Prostate gland (tissue), 2 donors: ENCODE measurements at regions of chr14 and their contacts with region 1.

Region 1: DNA sequence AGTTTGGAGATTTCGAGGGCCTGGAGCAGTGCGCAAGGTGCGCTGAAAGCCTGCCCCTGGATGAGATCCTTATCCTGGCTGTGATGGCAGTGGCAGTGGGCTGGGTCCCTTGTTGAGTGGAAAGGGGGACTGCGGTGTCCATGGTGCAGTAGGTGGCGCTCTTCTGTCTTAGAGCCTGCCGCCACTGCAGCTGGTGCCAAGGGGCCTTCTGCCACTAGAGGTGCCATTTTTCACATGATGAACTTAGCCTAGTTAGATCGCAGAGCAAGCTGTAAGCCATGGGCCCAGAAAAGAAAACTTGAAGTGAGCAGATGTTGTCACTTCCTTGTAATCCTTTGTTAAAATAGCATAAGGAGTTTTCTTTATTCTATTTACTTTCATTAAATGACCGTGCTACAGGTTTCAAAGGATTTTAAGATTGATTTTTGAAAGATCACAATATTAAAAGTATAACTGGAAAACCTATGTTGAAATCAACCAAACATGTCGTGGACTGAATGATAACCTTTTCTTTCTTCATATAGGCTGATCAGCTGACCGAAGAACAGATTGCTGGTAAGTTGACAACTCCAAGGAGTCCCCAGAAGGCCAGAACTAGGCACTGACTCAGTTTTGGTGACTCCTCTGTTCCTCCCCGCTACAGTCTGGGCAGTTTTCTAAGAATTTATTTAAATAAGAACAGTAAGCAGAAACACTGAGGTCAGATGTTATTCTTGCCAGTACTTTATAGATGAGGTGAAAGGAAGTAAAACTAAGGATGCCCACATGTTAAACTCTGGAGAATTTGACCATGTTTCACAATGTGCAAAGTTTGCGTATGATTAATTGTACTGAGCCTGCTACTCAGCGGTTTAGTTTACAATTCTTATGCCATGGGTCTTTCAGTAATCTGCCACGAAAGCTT is 3.0 kb downstream of the CALM1 start:
- DNase-seq: peak; percentile 95
- H3K4me3 ChIP-seq: peak overlapping the region in 1 of 2 donors; percentile 93
- H3K27ac ChIP-seq: peak overlapping the region; percentile 81 to 89
- H3K4me1 ChIP-seq: peaks cover 26% of the 10 kb centered on the region
- H3K27me3 ChIP-seq: no peaks in the 10 kb centered on the region
- CTCF ChIP-seq: peak; percentile 97 to 99 (median 99)
- POLR2A ChIP-seq: no peak

Region 2: DNA sequence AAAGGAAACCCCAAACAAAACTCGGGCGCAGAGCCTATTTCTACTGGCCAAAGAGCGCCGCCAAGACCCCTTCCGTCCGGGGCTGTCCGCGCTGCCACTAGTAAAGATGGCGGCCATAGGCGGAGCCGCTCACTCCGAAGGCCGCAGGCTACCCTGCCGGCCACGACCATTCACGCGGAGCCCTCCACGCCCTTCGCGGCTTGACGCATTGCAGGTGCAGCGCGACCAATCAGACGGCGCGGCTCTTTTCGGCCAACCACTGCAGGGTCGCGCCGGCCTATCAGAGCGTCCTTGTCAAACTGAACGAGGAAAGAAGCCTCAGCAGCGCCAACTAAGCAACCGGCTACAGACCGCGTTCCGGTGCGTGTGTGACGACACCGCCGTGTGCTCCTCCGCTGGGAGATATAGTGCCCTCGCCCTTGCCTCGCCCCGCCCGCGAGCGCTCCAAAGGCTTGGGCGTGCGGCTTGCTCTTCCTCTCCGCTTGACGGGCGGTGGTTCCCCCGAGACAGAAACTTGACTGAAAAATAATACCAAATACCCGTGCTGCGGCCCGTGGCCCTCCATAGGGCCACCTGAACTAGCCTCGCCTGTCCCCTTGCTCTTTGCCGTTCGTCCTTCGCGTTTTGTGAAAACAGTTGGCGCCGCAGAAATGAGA is 16.6 kb before region 1 on chr14:
- intact Hi-C with region 1: loop called (anchors 2 kb)
- DNase-seq: peak; percentile 100
- H3K4me3 ChIP-seq: peak overlapping the region; percentile 49 to 63
- H3K27ac ChIP-seq: peak overlapping the region; percentile 99 to 100
- H3K4me1 ChIP-seq: peaks cover 9% of the 10 kb centered on the region
- H3K27me3 ChIP-seq: no peaks in the 10 kb centered on the region
- CTCF ChIP-seq: peak in 2 of 4 experiments; percentile 34 to 39
- POLR2A ChIP-seq: peak; percentile 93

Region 3: DNA sequence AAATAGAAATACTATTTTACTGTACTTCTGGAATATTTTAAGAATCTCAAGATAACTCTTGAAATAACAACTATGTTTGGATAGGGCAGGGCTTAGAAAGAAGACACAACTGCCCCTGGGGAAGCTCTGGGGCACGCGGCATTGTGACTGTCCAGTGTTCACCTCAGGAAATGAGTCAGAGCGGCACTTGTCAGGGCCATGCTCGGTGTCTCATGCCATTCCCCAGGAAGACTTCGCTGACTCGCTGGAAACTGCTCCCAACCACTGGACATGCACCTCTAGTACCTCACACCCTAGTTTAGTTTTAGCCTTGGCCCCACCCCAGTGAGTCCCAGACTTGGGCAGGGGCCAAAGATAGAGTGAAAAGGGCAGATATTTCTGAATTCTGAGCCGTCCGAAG is 224.4 kb after region 1 on chr14:
- intact Hi-C with region 1: loop called (anchors 10 kb)
- DNase-seq: peak; percentile 28
- H3K4me3 ChIP-seq: no peak overlapping the region
- H3K27ac ChIP-seq: peak overlapping the region; percentile 33 to 44
- H3K4me1 ChIP-seq: peaks cover 9% of the 10 kb centered on the region
- H3K27me3 ChIP-seq: no peaks in the 10 kb centered on the region
- CTCF ChIP-seq: no peak
- POLR2A ChIP-seq: no peak

Region 4: DNA sequence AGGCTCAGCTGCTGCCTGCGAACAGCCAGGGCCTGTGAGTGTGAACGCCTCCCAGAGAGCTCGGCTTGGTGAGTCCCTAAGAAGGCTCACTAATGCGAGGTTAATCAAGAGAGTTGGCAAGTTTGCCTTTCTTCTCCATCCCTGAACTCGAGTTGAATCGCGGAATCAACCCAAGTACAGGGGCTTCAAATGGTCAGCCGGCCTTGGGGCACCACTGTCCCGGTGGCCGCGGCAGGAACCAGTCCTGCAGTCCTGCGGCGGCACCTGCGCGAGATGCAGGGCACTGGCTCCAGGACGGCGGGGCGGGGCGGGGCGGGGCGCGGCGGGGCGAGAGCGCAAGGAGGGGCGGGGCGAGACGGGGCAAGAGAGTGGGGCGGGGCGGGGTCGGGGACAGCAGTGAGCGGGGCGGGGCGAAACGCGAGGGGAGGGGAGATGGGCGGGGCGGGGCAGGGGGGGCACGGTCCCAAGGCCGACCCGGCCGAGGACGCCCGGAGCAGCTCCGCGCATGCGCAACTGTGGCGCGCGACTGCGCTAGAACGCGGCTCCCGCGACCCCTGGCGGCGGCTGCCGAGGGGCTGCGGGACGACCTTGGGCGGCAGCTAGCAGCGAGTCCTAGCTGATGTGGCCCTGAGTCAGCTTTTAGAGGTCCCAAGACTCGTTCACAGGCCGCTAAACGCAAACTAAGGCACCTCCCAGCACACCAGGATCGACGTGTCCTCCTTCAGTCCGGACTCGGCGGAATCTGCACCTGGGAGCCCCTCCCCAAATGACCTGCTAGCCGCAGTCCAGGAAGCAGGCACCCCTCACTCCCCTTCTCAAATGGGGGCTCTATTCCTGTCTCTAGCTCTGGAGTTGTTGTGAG is 358.5 kb after region 1 on chr14:
- intact Hi-C with region 1: loop called (anchors 2 kb)
- DNase-seq: peak; percentile 91
- H3K4me3 ChIP-seq: peak overlapping the region; percentile 35 to 42
- H3K27ac ChIP-seq: peak overlapping the region; percentile 85 to 87
- H3K4me1 ChIP-seq: peaks cover 8% of the 10 kb centered on the region
- H3K27me3 ChIP-seq: no peaks in the 10 kb centered on the region
- CTCF ChIP-seq: peak; percentile 93 to 98 (median 96)
- POLR2A ChIP-seq: peak; percentile 8